ENCODE measurements at regions of chr12 and their contacts with region 1.

Region 1: DNA sequence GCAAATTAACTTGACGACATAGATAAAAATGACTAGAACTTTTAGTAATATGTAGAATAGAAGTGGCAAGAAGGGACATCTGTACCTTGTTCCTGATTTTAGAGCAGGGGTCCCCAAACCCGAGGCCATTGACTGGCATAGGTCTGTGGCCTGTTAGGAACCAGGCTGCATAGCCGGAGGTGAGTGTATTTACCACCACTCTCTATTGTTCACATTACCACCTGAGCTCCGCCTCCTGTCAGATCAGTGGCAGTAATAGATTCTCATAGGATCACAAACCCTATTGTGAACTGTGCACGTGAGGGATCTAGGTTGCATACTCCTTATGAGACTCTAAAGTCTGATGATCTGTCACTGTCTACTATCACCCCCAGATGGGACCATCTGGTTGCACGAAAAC is 113.6 kb upstream of the AVPR1A start:
- DNase-seq: no peak
- H3K4me3 ChIP-seq: no peak overlapping the region
- H3K27ac ChIP-seq: no peak overlapping the region
- H3K4me1 ChIP-seq: no peaks in the 10 kb centered on the region
- H3K27me3 ChIP-seq: no peaks in the 10 kb centered on the region
- CTCF ChIP-seq: no peak
- EP300 ChIP-seq: no peak
- POLR2A ChIP-seq: no peak

Region 2: GRCh38 chr12:63164911-63165310 is 99.7 kb before region 1 on chr12:
- intact Hi-C with region 1: loop called in 1 of 4 experiments (anchors 5 kb)
- DNase-seq: no peak
- H3K4me3 ChIP-seq: no peak overlapping the region
- H3K27ac ChIP-seq: no peak overlapping the region
- H3K4me1 ChIP-seq: no peaks in the 10 kb centered on the region
- H3K27me3 ChIP-seq: no peaks in the 10 kb centered on the region
- CTCF ChIP-seq: no peak
- EP300 ChIP-seq: no peak
- POLR2A ChIP-seq: no peak

Measured in ovary (tissue), 10 donors.